Sigmoid colon (tissue), 7 donors: ENCODE measurements at regions of chr9 and their contacts with region 1.

Region 1: GRCh38 chr9:124257844-124258606 is at the start of gene NEK6:
- DNase-seq: peak; percentile 47
- H3K4me3 ChIP-seq: peak within 1 kb of the TSS; percentile 56 to 81 (median 78)
- H3K27ac ChIP-seq: peak within 1 kb of the TSS; percentile 78 to 96 (median 89)
- H3K4me1 ChIP-seq: peaks cover 0 to 56% (median 43%) of the 10 kb centered on the region in 4 donors
- H3K27me3 ChIP-seq: no peaks in the 10 kb centered on the region
- CTCF ChIP-seq: no peak
- EP300 ChIP-seq: no peak
- POLR2A ChIP-seq: no peak
- total RNA-seq, gene NEK6: 8.2 to 24.1 (median 14.2) TPM

Region 2: GRCh38 chr9:124291801-124292396 is 33.9 kb after region 1 on chr9:
- intact Hi-C with region 1: loop called (anchors 5 kb)
- DNase-seq: no peak
- H3K4me3 ChIP-seq: no peak overlapping the region
- H3K27ac ChIP-seq: peak overlapping the region; percentile 32 to 71 (median 53)
- H3K4me1 ChIP-seq: peaks cover 0 to 91% (median 78%) of the 10 kb centered on the region in 4 donors
- H3K27me3 ChIP-seq: no peaks in the 10 kb centered on the region
- CTCF ChIP-seq: no peak
- EP300 ChIP-seq: no peak
- POLR2A ChIP-seq: no peak

Region 3: DNA sequence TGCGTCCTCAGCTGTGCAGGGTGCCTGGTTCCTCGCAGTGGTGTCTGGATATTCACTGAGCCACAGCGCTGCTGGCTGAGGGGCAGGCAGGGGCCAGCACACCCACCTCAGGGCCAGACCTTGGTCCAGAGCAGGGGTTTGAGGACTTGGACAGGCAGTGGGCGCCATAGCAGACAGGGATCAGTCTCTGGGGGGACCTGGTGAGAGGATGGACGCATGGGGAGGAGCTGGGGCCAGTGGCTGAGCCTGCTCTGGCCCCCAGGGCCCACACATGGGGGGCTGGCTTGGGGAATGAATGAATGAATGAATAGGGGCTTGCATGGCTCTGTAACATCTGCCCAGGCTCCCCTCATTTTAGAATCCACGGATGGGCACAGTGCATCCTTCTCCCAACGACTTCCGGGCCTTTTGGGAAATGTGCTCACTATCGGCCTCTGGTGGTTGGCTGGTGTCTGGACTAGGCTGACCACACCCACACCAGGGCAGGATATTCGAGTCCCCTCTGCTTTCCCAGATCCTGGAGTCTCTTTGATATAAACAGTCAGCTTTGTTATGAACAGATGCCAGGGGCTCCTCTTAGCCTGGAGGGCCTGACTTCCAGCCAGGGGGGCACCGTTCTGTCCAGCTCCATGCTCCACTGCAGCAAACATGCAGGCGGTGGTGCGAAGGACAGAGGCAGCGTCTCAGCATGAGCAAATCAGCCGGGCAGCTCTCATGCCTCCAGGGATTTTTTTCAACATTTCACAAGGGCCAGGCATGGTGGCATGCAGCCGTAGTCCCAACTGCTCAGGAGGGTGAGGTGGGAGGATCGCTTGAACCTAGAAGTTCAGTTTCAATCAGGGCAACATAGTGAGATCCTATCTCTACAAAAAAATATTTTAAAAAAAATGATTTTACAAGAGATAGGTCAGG is 62.3 kb after region 1 on chr9:
- intact Hi-C with region 1: loop called (anchors 2 kb)
- DNase-seq: peak; percentile 81
- H3K4me3 ChIP-seq: no peak overlapping the region
- H3K27ac ChIP-seq: peak overlapping the region in 1 of 4 donors; percentile 7
- H3K4me1 ChIP-seq: peaks cover 0 to 10% (median 7%) of the 10 kb centered on the region in 4 donors
- H3K27me3 ChIP-seq: no peaks in the 10 kb centered on the region
- CTCF ChIP-seq: peak; percentile 74 to 86 (median 78)
- EP300 ChIP-seq: no peak
- POLR2A ChIP-seq: no peak